Common myeloid progenitor, CD34-positive (primary cell): ENCODE measurements at regions of chr14 and their contacts with region 1.

Region 1: GRCh38 chr14:52961060-52961639 is 10.3 kb upstream of the FERMT2 start:
- DNase-seq: peak; percentile 52 to 77 (median 69)
- H3K4me3 ChIP-seq: no peak overlapping the region
- H3K27ac ChIP-seq: no peak overlapping the region
- H3K4me1 ChIP-seq: no peaks in the 10 kb centered on the region
- H3K27me3 ChIP-seq: no peaks in the 10 kb centered on the region

Region 2: DNA sequence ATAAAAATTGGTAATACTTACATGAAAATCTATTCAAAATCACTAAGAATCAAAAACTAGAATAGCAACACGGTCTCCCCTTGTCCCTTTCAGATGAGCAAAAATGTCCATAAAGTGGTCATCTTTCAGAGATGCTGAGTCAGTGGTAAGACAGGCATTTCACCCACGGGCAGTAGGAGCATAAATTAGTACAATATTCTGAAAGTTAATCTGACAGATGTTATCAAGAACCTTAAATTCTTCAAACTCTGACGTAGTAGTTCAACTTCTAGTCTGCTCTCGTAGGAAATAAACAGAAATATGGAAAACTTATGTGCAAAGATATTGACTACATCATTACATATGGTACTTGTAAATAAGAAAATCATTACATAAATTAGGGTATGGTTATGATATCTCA is 136.6 kb before region 1 on chr14:
- CTCF ChIA-PET with region 1: interaction called, 32 read pairs
- POLR2A ChIA-PET with region 1: no interaction called
- DNase-seq: no peak
- H3K4me3 ChIP-seq: no peak overlapping the region
- H3K27ac ChIP-seq: no peak overlapping the region
- H3K4me1 ChIP-seq: no peaks in the 10 kb centered on the region
- H3K27me3 ChIP-seq: peaks cover 0 to 5% (median 0%) of the 10 kb centered on the region in 5 experiments

Region 3: DNA sequence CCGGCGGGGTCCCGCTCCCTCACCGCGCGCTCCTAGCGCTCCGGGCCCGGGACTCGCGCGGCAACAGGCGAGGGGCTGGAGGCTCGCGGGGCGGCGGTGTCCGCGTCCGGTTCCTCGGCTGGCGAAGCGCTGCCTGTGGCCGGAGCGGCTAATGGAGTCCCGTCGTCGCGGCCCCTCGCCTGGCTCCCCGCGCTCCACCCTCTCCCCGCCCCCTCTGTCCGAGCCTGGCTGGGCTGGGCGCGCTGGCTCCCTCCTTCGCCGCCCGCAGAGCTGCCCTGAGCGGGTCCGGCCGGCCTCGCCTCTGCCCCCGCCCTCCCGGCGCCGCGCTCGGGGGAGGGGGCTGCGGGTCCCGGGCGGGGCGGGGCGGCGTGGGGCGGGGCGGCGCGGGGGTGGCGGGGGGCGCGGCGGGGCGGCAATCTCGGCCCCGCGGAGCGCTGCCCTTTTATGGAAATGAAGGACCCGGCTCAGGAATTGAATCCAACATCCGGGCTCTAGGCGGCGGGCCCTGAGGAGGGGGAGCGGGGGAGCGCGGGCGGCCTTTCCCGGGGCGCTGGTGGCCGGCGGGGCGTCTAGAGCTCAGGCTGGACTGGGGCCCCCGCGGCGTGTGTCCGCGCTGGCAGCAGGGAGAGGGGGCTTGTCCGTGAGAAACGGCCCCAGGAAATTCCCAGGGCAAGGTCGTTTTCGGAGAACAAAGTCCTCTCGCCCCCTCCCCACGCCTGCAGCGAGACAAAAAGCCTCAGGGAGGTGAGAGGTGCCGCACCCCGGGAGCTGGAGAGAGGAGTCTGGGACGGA is 10.1 kb before region 1 on chr14 and contains the start of gene FERMT2:
- CTCF ChIA-PET with region 1: interaction called, 15 read pairs
- POLR2A ChIA-PET with region 1: no interaction called
- DNase-seq: peak in 2 of 3 donors; percentile 23 to 33
- H3K4me3 ChIP-seq: peak within 1 kb of the TSS; percentile 23 to 73 (median 66)
- H3K27ac ChIP-seq: no peak within 1 kb of the TSS
- H3K4me1 ChIP-seq: peaks cover 0 to 22% (median 20%) of the 10 kb centered on the region in 4 experiments
- H3K27me3 ChIP-seq: peaks cover 26 to 76% (median 34%) of the 10 kb centered on the region in 5 experiments